B cell (primary cell): ENCODE measurements at regions of chr1 and their contacts with region 1.

Region 1: GRCh38 chr1:43367904-43368645 is at the start of gene ELOVL1:
- DNase-seq: peak; percentile 94
- ATAC-seq: peak; percentile 88
- H3K4me3 ChIP-seq: peak within 1 kb of the TSS; percentile 64 to 90 (median 81)
- H3K4me3 Mint-ChIP-seq: peak within 1 kb of the TSS; percentile 96
- H3K27ac ChIP-seq: peak within 1 kb of the TSS; percentile 74 to 96
- H3K27ac Mint-ChIP-seq: peak within 1 kb of the TSS; percentile 97
- H3K4me1 ChIP-seq: peaks cover 18 to 26% of the 10 kb centered on the region in 2 donors
- H3K4me1 Mint-ChIP-seq: peaks cover 45% of the 10 kb centered on the region
- H3K27me3 ChIP-seq: no peaks in the 10 kb centered on the region
- H3K27me3 Mint-ChIP-seq: no peaks in the 10 kb centered on the region
- CTCF ChIP-seq: peak; percentile 13
- total RNA-seq, gene ELOVL1: 65.4 and 66.6 TPM in 2 replicates

Region 2: DNA sequence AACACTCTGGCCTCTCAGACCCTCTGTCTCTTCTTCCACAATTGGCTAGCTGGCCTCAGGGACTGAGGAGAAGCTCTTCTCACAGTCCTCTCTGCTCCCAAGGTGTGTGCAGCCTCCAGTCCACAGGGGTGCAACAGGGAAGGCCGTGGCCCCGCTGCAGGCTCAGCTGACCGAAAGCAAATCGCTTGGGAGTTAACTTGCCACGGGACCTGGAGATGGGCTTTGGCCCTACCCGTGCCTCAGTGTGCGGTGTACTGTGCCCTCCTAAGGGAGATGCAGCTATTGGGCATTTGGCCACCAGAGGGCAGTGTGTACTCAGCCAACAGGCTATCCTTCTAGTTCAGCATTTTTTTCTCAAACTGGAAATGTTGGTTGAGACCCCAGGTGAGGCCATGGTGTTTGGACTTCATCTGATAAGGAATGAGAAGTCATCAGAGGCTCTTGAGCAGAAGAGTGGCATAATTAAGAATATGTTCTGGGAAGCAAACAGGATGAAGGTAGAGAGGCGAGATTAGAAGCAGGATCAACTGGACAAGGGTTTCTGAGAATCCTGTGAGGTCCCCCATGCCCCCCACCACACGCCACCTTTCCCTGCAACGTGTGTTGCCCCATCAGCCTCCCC is 140.8 kb before region 1 on chr1:
- CTCF ChIA-PET with region 1: interaction called, 14 read pairs
- POLR2A ChIA-PET with region 1: interaction called, 4 read pairs
- intact Hi-C with region 1: loop called (anchors 1 kb)
- DNase-seq: peak; percentile 87
- ATAC-seq: peak; percentile 96
- H3K4me3 ChIP-seq: no peak overlapping the region
- H3K4me3 Mint-ChIP-seq: no peak overlapping the region
- H3K27ac ChIP-seq: no peak overlapping the region
- H3K27ac Mint-ChIP-seq: no peak overlapping the region
- H3K4me1 ChIP-seq: peaks cover 4 to 9% of the 10 kb centered on the region in 2 donors
- H3K4me1 Mint-ChIP-seq: peaks cover 10% of the 10 kb centered on the region
- H3K27me3 ChIP-seq: no peaks in the 10 kb centered on the region
- H3K27me3 Mint-ChIP-seq: no peaks in the 10 kb centered on the region
- CTCF ChIP-seq: peak; percentile 95

Region 3: GRCh38 chr1:43348809-43349583 is 19.1 kb before region 1 on chr1:
- CTCF ChIA-PET with region 1: no interaction called
- POLR2A ChIA-PET with region 1: interaction called, 4 read pairs
- intact Hi-C with region 1: loop called (anchors 1 kb)
- DNase-seq: peak; percentile 78
- ATAC-seq: peak; percentile 84
- H3K4me3 ChIP-seq: peak overlapping the region in 4 of 5 experiments; percentile 34 to 64 (median 46)
- H3K4me3 Mint-ChIP-seq: peak overlapping the region; percentile 89
- H3K27ac ChIP-seq: peak overlapping the region; percentile 80 to 87
- H3K27ac Mint-ChIP-seq: peak overlapping the region; percentile 97
- H3K4me1 ChIP-seq: peaks cover 4 to 5% of the 10 kb centered on the region in 2 donors
- H3K4me1 Mint-ChIP-seq: peaks cover 13% of the 10 kb centered on the region
- H3K27me3 ChIP-seq: no peaks in the 10 kb centered on the region
- H3K27me3 Mint-ChIP-seq: no peaks in the 10 kb centered on the region
- CTCF ChIP-seq: no peak

Region 4: GRCh38 chr1:43414634-43415223 is 46.7 kb after region 1 on chr1:
- CTCF ChIA-PET with region 1: interaction called, 11 read pairs
- POLR2A ChIA-PET with region 1: interaction called, 4 read pairs
- intact Hi-C with region 1: loop called (anchors 2 kb)
- DNase-seq: peak; percentile 79
- ATAC-seq: peak; percentile 96
- H3K4me3 ChIP-seq: no peak overlapping the region
- H3K4me3 Mint-ChIP-seq: no peak overlapping the region
- H3K27ac ChIP-seq: no peak overlapping the region
- H3K27ac Mint-ChIP-seq: peak overlapping the region; percentile 34
- H3K4me1 ChIP-seq: no peaks in the 10 kb centered on the region
- H3K4me1 Mint-ChIP-seq: peaks cover 3% of the 10 kb centered on the region
- H3K27me3 ChIP-seq: no peaks in the 10 kb centered on the region
- H3K27me3 Mint-ChIP-seq: no peaks in the 10 kb centered on the region
- CTCF ChIP-seq: peak; percentile 79

Region 5: GRCh38 chr1:43650310-43651085 is 282.4 kb after region 1 on chr1:
- CTCF ChIA-PET with region 1: no interaction called
- POLR2A ChIA-PET with region 1: interaction called, 5 read pairs
- intact Hi-C with region 1: loop called (anchors 5 kb)
- DNase-seq: peak; percentile 97
- ATAC-seq: peak; percentile 77
- H3K4me3 ChIP-seq: peak overlapping the region; percentile 82 to 98 (median 92)
- H3K4me3 Mint-ChIP-seq: peak overlapping the region; percentile 92
- H3K27ac ChIP-seq: peak overlapping the region; percentile 84 to 86
- H3K27ac Mint-ChIP-seq: peak overlapping the region; percentile 94
- H3K4me1 ChIP-seq: peaks cover 23 to 25% of the 10 kb centered on the region in 2 donors
- H3K4me1 Mint-ChIP-seq: peaks cover 45% of the 10 kb centered on the region
- H3K27me3 ChIP-seq: no peaks in the 10 kb centered on the region
- H3K27me3 Mint-ChIP-seq: peaks cover under 1% of the 10 kb centered on the region
- CTCF ChIP-seq: no peak